A549 (cell line): ENCODE measurements at regions of chr10 and their contacts with region 1.

Region 1: GRCh38 chr10:114304017-114304570 is 65.0 kb downstream of the VWA2 start:
- DNase-seq: peak; percentile 79 to 80
- ATAC-seq: peak; percentile 67 to 80
- H3K4me3 ChIP-seq: peak overlapping the region; percentile 29
- H3K27ac ChIP-seq: peak overlapping the region; percentile 62 to 78
- H3K4me1 ChIP-seq: peaks cover 28% of the 10 kb centered on the region
- CTCF ChIP-seq: peak; percentile 93
- EP300 ChIP-seq: no peak
- POLR2A ChIP-seq: no peak
- RAD21 ChIP-seq: peak; percentile 96 to 98

Region 2: GRCh38 chr10:114131094-114131493 is 173.0 kb before region 1 on chr10:
- CTCF ChIA-PET with region 1: no interaction called
- POLR2A ChIA-PET with region 1: no interaction called
- DNase-seq: no peak
- ATAC-seq: no peak
- H3K4me3 ChIP-seq: no peak overlapping the region
- H3K27ac ChIP-seq: no peak overlapping the region
- H3K4me1 ChIP-seq: no peaks in the 10 kb centered on the region
- CTCF ChIP-seq: no peak
- EP300 ChIP-seq: no peak
- POLR2A ChIP-seq: no peak
- RAD21 ChIP-seq: no peak

Region 3: GRCh38 chr10:114212153-114212552 is 91.9 kb before region 1 on chr10:
- CTCF ChIA-PET with region 1: no interaction called
- POLR2A ChIA-PET with region 1: no interaction called
- DNase-seq: no peak
- ATAC-seq: no peak
- H3K4me3 ChIP-seq: no peak overlapping the region
- H3K27ac ChIP-seq: no peak overlapping the region
- H3K4me1 ChIP-seq: no peaks in the 10 kb centered on the region
- CTCF ChIP-seq: no peak
- EP300 ChIP-seq: no peak
- POLR2A ChIP-seq: no peak
- RAD21 ChIP-seq: no peak

Region 4: GRCh38 chr10:114320249-114321116 is 16.4 kb after region 1 on chr10:
- CTCF ChIA-PET with region 1: interaction called, 21 read pairs
- POLR2A ChIA-PET with region 1: interaction called, 3 read pairs
- DNase-seq: peak; percentile 69 to 85
- ATAC-seq: peak; percentile 86 to 89
- H3K4me3 ChIP-seq: no peak overlapping the region
- H3K27ac ChIP-seq: peak overlapping the region; percentile 59 to 76
- H3K4me1 ChIP-seq: peaks cover 43% of the 10 kb centered on the region
- CTCF ChIP-seq: no peak
- EP300 ChIP-seq: 0 out of 5 replicates have a peak, but pooled peaks of 1 of the 2 experiments have one; percentile 34
- POLR2A ChIP-seq: no peak
- RAD21 ChIP-seq: 0 out of 5 replicates have a peak, but pooled peaks of 1 of the 2 experiments have one; percentile 17

Region 5: DNA sequence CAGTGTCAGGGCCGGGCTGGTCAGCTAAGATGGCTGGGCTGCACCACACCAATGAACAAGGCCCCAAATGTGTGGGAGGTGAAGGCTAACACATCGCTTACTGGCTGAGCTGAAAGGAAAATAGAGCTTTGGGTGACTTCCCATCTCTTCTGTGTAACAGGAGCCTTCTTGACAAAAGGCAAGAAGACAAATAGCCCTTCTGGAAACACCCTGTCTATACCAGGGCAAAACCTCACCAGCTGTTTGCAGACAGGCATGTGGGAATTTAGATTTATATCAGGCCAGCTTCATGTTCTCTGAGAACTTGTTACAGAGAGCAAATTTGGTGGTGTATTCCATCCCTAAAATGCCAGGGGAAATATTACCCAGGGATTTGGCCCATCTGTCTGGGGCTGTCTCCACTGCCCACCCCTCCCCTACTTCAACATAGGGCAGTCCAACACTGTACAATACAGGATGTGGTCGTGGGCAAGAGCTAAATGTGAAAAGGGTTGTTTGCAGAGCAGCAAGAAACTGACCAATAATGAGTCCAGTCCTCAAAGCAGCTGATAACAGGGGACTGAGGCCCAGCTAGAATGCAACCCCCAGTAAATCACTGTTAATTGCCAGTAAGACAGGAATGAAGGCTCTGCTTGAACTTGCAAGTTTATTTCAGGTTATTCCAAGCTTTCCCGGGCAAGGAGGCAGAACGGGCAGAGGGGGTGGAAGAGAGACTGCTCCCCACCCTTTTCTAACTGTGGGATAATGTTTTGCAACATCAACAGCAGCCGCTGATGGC is 63.1 kb after region 1 on chr10:
- CTCF ChIA-PET with region 1: interaction called, 13 read pairs
- POLR2A ChIA-PET with region 1: interaction called, 3 read pairs
- DNase-seq: peak in 1 of 2 experiments; percentile 20
- ATAC-seq: peak; percentile 63 to 69; a peak in 5 of 6 replicates
- H3K4me3 ChIP-seq: peak overlapping the region; percentile 4; the same call in 2 of the 3 replicates
- H3K27ac ChIP-seq: peak overlapping the region; percentile 78 to 90
- H3K4me1 ChIP-seq: peaks cover 59% of the 10 kb centered on the region
- CTCF ChIP-seq: no peak
- EP300 ChIP-seq: no peak
- POLR2A ChIP-seq: no peak
- RAD21 ChIP-seq: no peak; a peak in 1 of 5 replicates

Region 6: DNA sequence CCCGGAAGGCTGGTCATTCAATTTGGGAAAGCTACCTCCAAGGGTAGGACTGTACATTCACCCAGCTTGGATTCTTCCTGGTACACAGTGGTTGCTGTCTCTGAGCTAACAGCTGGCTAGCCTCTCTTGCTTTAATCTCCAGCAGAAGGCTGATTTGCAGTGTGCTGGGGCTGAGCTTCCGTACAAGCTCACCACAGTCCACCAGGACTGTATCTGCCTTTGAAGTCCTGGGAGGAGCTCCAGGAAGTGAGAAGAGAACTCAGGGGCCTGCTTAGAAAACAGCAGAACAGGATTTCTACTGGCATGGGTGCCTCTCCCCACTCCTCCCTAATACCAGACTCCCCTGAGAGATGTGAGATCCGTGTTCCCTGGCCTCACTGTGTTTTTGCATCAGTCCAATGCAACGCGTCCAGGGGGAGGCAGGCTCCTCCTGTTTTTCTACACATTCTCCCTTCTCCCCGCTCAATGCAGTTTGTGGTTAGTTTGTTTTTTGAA is 93.6 kb after region 1 on chr10:
- CTCF ChIA-PET with region 1: interaction called, 76 read pairs
- POLR2A ChIA-PET with region 1: interaction called, 8 read pairs
- DNase-seq: no peak
- ATAC-seq: no peak; a peak in 1 of 6 replicates
- H3K4me3 ChIP-seq: no peak overlapping the region
- H3K27ac ChIP-seq: peak overlapping the region in 1 of 2 experiments; percentile 25; a peak in 1 of 6 replicates
- H3K4me1 ChIP-seq: peaks cover 33% of the 10 kb centered on the region
- CTCF ChIP-seq: no peak
- EP300 ChIP-seq: no peak
- POLR2A ChIP-seq: no peak
- RAD21 ChIP-seq: no peak

Region 7: DNA sequence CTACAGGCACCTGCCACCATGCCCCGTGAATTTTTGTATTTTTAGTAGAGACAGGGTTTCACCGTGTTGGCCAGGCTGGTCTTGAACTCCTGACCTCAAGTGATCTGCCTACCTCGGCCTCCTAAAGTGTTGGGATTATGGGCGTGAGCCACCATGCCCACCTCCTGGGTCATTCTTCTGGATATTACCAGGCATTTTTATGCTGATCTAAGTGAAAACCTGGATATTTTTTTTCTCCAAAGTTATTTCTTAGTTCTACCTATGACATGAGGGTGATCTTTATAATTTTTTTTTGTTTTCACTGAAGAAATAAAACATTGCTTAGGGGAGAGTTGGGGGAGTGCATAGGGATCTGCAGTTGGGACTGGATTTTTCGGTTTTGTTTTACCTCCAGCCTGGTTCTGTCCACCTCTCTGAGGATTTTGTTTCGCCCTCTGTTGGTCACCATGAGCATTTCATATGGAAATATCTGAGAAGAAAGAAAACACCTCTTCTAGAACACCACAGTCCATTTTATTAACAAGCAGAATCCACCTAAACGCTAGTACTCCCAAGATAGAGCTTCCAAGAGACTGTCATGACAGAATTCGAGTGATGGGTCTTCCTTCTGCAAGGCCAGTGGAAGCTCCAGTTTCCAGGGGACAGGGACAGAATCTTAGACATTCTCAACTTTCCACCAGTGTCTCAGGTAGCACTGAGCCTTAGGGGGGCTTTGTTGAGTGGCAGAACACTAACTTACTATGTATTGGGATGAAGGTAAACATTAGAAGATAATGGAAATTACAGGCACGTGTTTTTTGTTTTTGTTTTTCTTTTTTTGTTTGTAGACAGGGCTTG is 133.6 kb after region 1 on chr10:
- CTCF ChIA-PET with region 1: interaction called, 140 read pairs
- POLR2A ChIA-PET with region 1: interaction called, 3 read pairs
- DNase-seq: peak; percentile 41 to 64
- ATAC-seq: peak; percentile 75 to 85; a peak in 5 of 6 replicates
- H3K4me3 ChIP-seq: no peak overlapping the region
- H3K27ac ChIP-seq: no peak overlapping the region
- H3K4me1 ChIP-seq: no peaks in the 10 kb centered on the region
- CTCF ChIP-seq: peak; percentile 66
- EP300 ChIP-seq: no peak
- POLR2A ChIP-seq: no peak
- RAD21 ChIP-seq: peak; percentile 70 to 72

Region 8: DNA sequence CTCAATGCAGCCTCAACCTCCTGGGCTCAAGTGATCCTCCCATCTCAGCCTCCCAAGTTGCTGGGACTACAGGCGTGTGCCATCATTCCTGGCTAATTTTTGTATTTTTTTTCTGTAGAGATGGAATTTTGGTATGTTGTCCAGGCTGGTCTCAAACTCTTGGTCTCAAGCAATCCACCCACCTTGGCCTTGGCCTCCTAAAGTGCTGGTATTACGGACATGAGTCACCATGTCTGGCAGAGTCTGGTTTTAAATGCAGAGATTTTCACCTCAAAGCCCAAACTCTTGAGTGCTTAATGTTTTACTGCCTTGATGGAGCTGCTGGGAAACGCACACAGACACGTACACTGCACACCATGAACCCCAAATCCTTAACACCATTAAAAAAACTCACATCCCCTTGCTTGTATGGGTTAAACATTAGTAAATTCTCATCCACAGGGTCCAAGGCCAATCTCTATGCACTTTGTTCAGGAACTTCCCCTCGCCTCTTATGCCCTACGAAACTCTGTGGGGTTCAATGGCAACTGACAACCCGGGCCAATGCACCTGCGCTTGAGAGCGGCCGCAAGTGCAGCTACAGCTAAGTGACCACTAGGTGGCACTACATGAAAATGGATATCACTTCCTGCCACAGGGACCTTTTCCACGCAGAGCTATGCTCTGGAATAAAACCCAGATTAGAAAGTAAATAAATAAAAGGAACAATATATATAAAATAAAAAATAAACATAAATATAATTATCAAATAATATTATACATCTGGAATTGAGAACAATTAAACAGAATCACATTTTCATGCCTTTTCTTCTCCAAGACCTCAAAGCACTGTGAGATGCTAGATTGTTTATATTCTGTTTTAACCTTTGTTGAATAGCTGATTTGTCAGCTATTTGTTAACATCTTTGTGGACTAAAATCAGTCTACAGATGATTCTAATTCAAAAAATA is 167.1 kb after region 1 on chr10:
- CTCF ChIA-PET with region 1: interaction called, 17 read pairs
- POLR2A ChIA-PET with region 1: interaction called, 6 read pairs
- DNase-seq: peak; percentile 58 to 73
- ATAC-seq: peak; percentile 94 to 96
- H3K4me3 ChIP-seq: no peak overlapping the region
- H3K27ac ChIP-seq: no peak overlapping the region
- H3K4me1 ChIP-seq: no peaks in the 10 kb centered on the region
- CTCF ChIP-seq: peak; percentile 91
- EP300 ChIP-seq: no peak
- POLR2A ChIP-seq: no peak
- RAD21 ChIP-seq: peak; percentile 93 to 94

Region 9: GRCh38 chr10:114550756-114551635 is 246.9 kb after region 1 on chr10:
- CTCF ChIA-PET with region 1: interaction called, 38 read pairs
- POLR2A ChIA-PET with region 1: no interaction called
- DNase-seq: peak; percentile 9 to 17
- ATAC-seq: peak in 1 of 2 experiments; percentile 30; a peak in 2 of 6 replicates
- H3K4me3 ChIP-seq: no peak overlapping the region
- H3K27ac ChIP-seq: no peak overlapping the region
- H3K4me1 ChIP-seq: no peaks in the 10 kb centered on the region
- CTCF ChIP-seq: peak; percentile 79
- EP300 ChIP-seq: no peak
- POLR2A ChIP-seq: no peak
- RAD21 ChIP-seq: peak; percentile 78 to 93